ENCODE measurements at regions of chr10 and their contacts with region 1.

Region 1: GRCh38 chr10:32055813-32056600 is at the start of gene KIF5B:
- DNase-seq: peak; percentile 79
- H3K4me3 ChIP-seq: peak within 1 kb of the TSS; percentile 82 to 95 (median 91)
- H3K27ac ChIP-seq: peak within 1 kb of the TSS; percentile 56
- H3K4me1 ChIP-seq: peaks cover 3% of the 10 kb centered on the region
- H3K27me3 ChIP-seq: no peaks in the 10 kb centered on the region
- CTCF ChIP-seq: no peak
- total RNA-seq, gene KIF5B: 146 to 168 TPM

Region 2: DNA sequence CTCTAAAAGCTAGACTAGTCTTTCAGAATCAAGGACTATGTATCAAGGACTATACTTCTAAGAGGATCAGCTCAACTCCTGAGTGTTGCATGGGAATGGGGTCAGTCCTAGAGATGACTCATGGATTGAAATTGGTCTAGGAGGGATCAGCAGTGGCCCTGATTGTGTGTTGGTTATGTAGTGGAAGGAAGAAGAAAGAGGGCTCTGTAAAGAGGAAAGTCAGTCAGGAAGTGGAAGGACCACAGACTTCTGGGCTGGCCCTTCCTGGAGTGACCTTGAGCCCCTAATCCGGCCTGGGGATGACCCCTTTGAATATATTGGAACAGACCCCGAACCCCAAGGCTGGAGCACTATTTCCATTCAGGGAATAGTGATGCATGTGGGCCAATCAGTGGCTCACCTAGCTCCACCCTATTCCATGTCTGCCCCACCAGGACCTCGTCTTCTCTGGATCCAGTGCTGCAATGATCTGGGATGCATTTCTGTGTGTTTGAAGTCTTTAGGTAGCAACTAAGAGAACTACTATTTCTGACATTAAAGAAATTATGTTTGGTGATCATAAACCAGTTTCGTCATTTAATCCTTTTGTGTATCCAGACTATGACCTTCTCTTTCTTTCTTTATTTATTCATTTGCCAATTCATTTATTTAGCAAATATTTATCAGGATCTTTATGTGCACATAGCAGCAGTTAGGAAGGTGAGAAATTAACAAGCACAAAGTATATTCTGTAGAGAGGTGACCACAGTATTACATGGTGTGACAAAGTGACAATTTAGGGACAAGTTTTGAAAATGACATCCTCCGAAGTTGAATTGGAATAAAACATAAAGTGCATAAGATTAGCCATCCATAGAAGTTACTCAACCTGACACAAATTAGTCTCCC is 48.9 kb after region 1 on chr10:
- CTCF ChIA-PET with region 1: no interaction called
- dilution Hi-C with region 1: no loop called
- in situ Hi-C with region 1: no loop called
- intact Hi-C with region 1: no loop called
- DNase-seq: no peak
- H3K4me3 ChIP-seq: no peak overlapping the region
- H3K27ac ChIP-seq: no peak overlapping the region
- H3K4me1 ChIP-seq: no peaks in the 10 kb centered on the region
- H3K27me3 ChIP-seq: peaks cover 2% of the 10 kb centered on the region
- CTCF ChIP-seq: no peak

Region 3: GRCh38 chr10:32139223-32140073 is 83.4 kb after region 1 on chr10:
- CTCF ChIA-PET with region 1: no interaction called
- dilution Hi-C with region 1: no loop called
- in situ Hi-C with region 1: loop called (anchors 10 kb)
- intact Hi-C with region 1: loop called (anchors 1 kb)
- DNase-seq: peak; percentile 94
- H3K4me3 ChIP-seq: no peak overlapping the region
- H3K27ac ChIP-seq: peak overlapping the region; percentile 89
- H3K4me1 ChIP-seq: peaks cover 32% of the 10 kb centered on the region
- H3K27me3 ChIP-seq: no peaks in the 10 kb centered on the region
- CTCF ChIP-seq: peak; percentile 24 to 48

Region 4: GRCh38 chr10:32149252-32149955 is 93.4 kb after region 1 on chr10:
- CTCF ChIA-PET with region 1: no interaction called
- dilution Hi-C with region 1: no loop called
- in situ Hi-C with region 1: loop called (anchors 10 kb)
- intact Hi-C with region 1: loop called (anchors 2 kb)
- DNase-seq: peak; percentile 89
- H3K4me3 ChIP-seq: no peak overlapping the region
- H3K27ac ChIP-seq: peak overlapping the region; percentile 98
- H3K4me1 ChIP-seq: peaks cover 25% of the 10 kb centered on the region
- H3K27me3 ChIP-seq: no peaks in the 10 kb centered on the region
- CTCF ChIP-seq: peak; percentile 5 to 19

Region 5: GRCh38 chr10:32190890-32191491 is 135.0 kb after region 1 on chr10:
- CTCF ChIA-PET with region 1: no interaction called
- dilution Hi-C with region 1: no loop called
- in situ Hi-C with region 1: no loop called
- intact Hi-C with region 1: loop called (anchors 5 kb)
- DNase-seq: peak; percentile 27
- H3K4me3 ChIP-seq: no peak overlapping the region
- H3K27ac ChIP-seq: no peak overlapping the region
- H3K4me1 ChIP-seq: no peaks in the 10 kb centered on the region
- H3K27me3 ChIP-seq: no peaks in the 10 kb centered on the region
- CTCF ChIP-seq: peak; percentile 65 to 66

Region 6: GRCh38 chr10:32367793-32368453 is 311.9 kb after region 1 on chr10:
- CTCF ChIA-PET with region 1: no interaction called
- dilution Hi-C with region 1: no loop called
- in situ Hi-C with region 1: no loop called
- intact Hi-C with region 1: loop called (anchors 5 kb)
- DNase-seq: peak; percentile 51
- H3K4me3 ChIP-seq: no peak overlapping the region
- H3K27ac ChIP-seq: peak overlapping the region; percentile 8
- H3K4me1 ChIP-seq: no peaks in the 10 kb centered on the region
- H3K27me3 ChIP-seq: no peaks in the 10 kb centered on the region
- CTCF ChIP-seq: peak; percentile 73 to 76

Measured in mammary epithelial cell (primary cell).